Heart left ventricle (tissue), 16 donors: ENCODE measurements at regions of chr20 and their contacts with region 1.

Region 1: GRCh38 chr20:20860078-20860806 is 147.8 kb upstream of the RALGAPA2 start:
- DNase-seq: peak; percentile 80 to 90 (median 87)
- ATAC-seq: peak; percentile 67 to 90 (median 82)
- H3K4me3 ChIP-seq: no peak overlapping the region
- H3K27ac ChIP-seq: no peak overlapping the region
- H3K4me1 ChIP-seq: no peaks in the 10 kb centered on the region
- H3K27me3 ChIP-seq: peaks cover 0 to 23% (median 5%) of the 10 kb centered on the region in 9 donors
- CTCF ChIP-seq: peak; percentile 87 to 98 (median 94)
- POLR2A ChIP-seq: no peak

Region 2: DNA sequence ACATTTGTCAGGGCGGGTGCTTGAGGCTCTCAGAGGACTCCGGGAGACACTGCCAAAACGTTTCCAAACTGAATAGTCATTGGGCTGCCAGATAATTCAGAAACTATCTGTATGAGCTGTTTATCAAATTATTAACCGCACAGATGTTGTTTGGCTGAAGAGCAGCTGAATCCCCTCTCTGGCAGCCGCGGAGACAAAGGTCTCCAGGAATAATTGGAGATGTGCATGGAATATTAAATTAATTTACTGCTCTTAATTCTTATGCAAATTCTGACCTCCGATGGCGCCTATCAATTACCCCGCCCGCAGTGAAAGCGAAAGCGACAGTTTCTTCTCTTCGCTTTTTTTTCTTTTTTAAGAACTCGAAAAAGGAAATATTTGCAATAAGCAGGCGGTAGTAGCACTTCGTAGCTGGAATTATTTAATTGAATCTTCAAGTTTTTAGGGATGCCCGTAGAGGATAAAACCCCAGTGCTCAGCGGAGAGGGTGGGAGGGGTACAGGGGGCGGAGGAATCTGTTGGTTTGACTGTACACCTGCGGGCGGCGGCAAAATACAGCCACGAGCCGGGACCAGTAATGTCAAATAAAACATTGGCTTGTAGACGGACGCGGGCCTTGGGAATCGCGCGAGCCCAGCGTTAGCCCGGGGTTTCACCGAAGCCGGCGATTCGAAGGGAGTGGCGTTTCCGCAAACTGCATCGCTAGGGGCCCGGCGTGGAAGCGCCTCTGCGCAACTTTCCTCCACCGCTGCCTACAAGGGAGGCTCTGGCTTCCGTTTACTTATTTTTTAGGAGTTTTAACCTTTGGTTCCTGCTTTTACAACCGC is 239.7 kb after region 1 on chr20:
- intact Hi-C with region 1: loop called in 1 of 10 experiments (anchors 10 kb)
- DNase-seq: peak in 4 of 5 donors; percentile 33 to 72 (median 48)
- ATAC-seq: peak in 1 of 4 donors; percentile 58
- H3K4me3 ChIP-seq: peak overlapping the region; percentile 8 to 66 (median 48)
- H3K27ac ChIP-seq: peak overlapping the region in 1 of 12 donors; percentile 80
- H3K4me1 ChIP-seq: peaks cover 0 to 41% (median 30%) of the 10 kb centered on the region in 12 donors
- H3K27me3 ChIP-seq: peaks cover 51 to 100% (median 85%) of the 10 kb centered on the region in 9 donors
- CTCF ChIP-seq: no peak
- POLR2A ChIP-seq: no peak

Region 3: DNA sequence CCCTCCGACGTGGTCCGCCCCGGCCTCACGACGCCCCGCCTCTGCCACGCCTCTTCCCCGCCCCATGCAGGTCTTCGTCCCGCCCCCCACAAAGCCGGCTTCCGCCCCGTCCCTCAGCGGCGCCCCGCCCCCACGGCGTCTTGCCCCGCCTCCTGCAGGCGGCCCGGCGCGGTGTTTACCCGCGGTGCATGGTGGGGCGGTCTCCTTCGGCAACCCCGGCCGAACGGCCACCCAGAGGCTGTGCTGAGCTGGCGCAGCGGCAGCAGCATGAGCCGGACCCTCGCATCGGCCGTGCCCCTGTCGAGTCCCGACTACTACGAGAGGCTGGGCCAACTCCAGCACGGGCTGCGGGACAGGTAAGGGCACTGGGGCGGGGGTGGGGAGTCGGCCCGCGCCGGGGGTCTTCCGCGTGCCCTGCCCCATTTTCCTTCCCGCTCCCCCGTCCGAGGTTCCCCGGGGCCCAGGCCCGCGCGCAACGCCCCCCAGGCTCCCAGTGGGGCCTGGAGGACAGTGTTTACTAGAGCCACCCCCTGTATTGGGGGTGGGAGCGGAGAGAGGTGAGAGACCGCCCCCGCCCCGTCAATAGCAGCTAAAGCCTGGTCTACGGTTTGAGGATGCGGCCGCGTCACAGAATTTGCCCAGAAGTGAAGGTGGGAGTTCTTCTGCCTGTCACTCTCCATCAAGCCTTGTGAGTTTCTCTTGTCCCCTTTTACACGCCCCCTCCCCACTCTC is 265.8 kb after region 1 on chr20 and contains the start of gene KIZ:
- intact Hi-C with region 1: loop called in 1 of 10 experiments (anchors 10 kb)
- DNase-seq: peak; percentile 97 to 99 (median 97)
- ATAC-seq: peak; percentile 97 to 100 (median 100)
- H3K4me3 ChIP-seq: peak within 1 kb of the TSS; percentile 80 to 99 (median 93)
- H3K27ac ChIP-seq: peak within 1 kb of the TSS; percentile 71 to 92 (median 85)
- H3K4me1 ChIP-seq: peaks cover 0 to 21% (median 11%) of the 10 kb centered on the region in 12 donors
- H3K27me3 ChIP-seq: peaks cover 0 to 2% (median 0%) of the 10 kb centered on the region in 9 donors
- CTCF ChIP-seq: peak; percentile 19 to 60 (median 34)
- POLR2A ChIP-seq: peak in 1 of 2 donors; percentile 92
- total RNA-seq, gene KIZ: 15.2 to 31.2 (median 25.2) TPM

Region 4: DNA sequence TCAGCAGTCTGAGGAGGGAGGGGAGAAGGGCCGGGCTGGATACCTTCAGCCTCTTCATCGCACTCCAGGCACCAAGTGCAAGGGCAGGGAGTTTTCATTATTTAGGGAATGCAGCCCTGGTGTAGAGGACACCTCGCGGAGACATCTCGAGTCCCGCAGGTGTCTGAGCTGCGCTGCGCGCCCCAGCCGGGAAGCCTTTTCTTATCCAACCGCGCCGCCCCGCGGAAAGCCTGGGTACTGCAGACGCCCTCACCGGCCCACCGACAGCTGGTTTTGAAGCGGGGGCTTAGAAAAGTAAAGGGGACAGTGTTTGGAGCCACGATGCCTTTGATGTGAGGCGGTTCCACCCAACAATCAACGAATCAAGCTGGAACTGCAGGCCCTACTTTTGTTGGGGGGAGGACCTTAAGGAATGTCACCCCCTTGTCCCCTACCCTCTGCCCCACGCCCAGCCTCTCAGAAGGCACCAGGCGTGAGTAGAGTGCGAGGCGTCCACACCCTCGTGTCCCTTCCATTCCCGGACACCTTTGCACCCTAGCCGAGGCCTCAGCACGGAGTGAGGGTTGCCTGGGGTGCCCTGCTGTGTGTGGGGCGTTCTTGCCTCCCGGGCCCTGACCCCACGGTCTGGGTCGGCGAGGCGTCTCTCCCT is 645.0 kb after region 1 on chr20:
- intact Hi-C with region 1: loop called (anchors 2 to 5 kb)
- DNase-seq: peak; percentile 36 to 86 (median 55)
- ATAC-seq: peak in 3 of 4 donors; percentile 48 to 76 (median 70)
- H3K4me3 ChIP-seq: peak overlapping the region in 9 of 12 donors; percentile 22 to 57 (median 44)
- H3K27ac ChIP-seq: no peak overlapping the region
- H3K4me1 ChIP-seq: peaks cover 0 to 31% (median 19%) of the 10 kb centered on the region in 12 donors
- H3K27me3 ChIP-seq: peaks cover 51 to 98% (median 76%) of the 10 kb centered on the region in 9 donors
- CTCF ChIP-seq: peak; percentile 88 to 97 (median 93)
- POLR2A ChIP-seq: no peak

Region 5: DNA sequence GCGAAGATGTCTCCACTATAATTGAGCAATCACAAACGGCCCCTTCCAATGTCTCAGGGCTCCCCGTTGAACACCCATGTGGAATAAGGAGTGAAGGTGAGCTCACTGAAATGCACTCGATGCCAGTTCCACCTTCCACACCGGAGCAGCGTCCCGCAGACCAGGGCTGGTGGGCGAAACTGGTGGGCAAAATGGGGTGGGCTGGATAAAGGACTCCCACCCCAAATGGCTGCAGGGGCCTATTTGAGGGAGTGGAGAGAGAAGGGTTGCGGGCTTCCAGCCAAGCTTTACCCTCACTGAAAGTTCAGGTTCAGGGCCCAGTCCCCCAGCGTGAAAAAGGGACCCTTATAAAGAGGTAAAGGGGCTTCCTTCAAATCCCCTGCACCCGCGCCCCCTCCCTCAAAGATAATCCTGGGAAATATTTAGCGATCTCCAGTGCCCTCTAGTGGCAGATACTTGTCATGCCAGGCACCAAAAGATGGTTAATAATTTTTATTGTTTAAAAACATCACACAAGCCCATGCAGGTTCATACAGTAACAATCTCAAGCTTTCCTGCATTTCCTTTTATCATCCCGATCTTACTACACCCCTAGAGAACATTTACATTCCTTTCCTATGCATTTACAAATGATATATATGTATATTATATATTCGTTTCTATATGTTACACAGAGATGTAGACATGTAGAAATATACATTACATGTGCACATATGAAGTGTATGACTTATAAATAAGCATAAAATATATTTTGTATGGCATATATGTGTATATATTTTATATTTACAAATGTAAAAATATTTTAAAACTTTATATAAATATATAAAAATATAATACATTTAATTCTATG is 711.8 kb after region 1 on chr20:
- intact Hi-C with region 1: loop called in 3 of 10 experiments (anchors 2 to 5 kb)
- DNase-seq: no peak
- ATAC-seq: no peak
- H3K4me3 ChIP-seq: no peak overlapping the region
- H3K27ac ChIP-seq: no peak overlapping the region
- H3K4me1 ChIP-seq: no peaks in the 10 kb centered on the region
- H3K27me3 ChIP-seq: peaks cover 0 to 41% (median 17%) of the 10 kb centered on the region in 9 donors
- CTCF ChIP-seq: peak; percentile 74 to 89 (median 84)
- POLR2A ChIP-seq: no peak

Region 6: GRCh38 chr20:21615617-21616080 is 755.4 kb after region 1 on chr20:
- intact Hi-C with region 1: loop called in 1 of 10 experiments (anchors 5 kb)
- DNase-seq: peak in 4 of 5 donors; percentile 15 to 42 (median 32)
- ATAC-seq: peak in 3 of 4 donors; percentile 54 to 72 (median 64)
- H3K4me3 ChIP-seq: no peak overlapping the region
- H3K27ac ChIP-seq: no peak overlapping the region
- H3K4me1 ChIP-seq: no peaks in the 10 kb centered on the region
- H3K27me3 ChIP-seq: peaks cover 0 to 28% (median 5%) of the 10 kb centered on the region in 9 donors
- CTCF ChIP-seq: peak; percentile 40 to 75 (median 64)
- POLR2A ChIP-seq: no peak